Mammary epithelial cell (primary cell): ENCODE measurements at regions of chr17 and their contacts with region 1.

Region 1: DNA sequence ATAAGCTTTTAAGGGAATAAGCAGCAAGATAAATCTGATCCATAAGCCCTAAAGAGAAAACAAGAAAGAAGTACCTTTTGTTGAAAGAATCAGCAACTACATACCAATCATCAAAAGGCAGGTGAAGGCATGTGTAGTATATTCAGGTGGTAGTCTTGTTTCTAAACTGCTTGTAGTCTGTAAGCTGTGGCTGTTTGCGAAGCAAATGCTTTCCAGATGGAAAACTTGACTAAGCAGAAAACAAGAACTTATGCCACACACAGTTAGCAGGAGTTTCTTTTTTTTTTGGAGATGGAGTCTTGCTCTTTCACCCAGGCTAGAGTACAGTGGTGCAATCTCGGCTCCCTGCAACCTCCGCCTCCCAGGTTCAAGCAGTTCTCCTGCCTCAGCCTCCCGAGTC is 5.7 kb downstream of the CBX1 start:
- DNase-seq: no peak
- H3K4me3 ChIP-seq: no peak overlapping the region
- H3K27ac ChIP-seq: no peak overlapping the region
- H3K4me1 ChIP-seq: peaks cover 6% of the 10 kb centered on the region
- H3K27me3 ChIP-seq: no peaks in the 10 kb centered on the region
- CTCF ChIP-seq: no peak

Region 2: GRCh38 chr17:48030531-48030930 is 65.1 kb before region 1 on chr17:
- CTCF ChIA-PET with region 1: no interaction called
- dilution Hi-C with region 1: loop called (anchors 5 kb)
- in situ Hi-C with region 1: no loop called
- intact Hi-C with region 1: no loop called
- DNase-seq: no peak
- H3K4me3 ChIP-seq: no peak overlapping the region
- H3K27ac ChIP-seq: no peak overlapping the region
- H3K4me1 ChIP-seq: peaks cover 17% of the 10 kb centered on the region
- H3K27me3 ChIP-seq: no peaks in the 10 kb centered on the region
- CTCF ChIP-seq: no peak